ENCODE measurements at regions of chr16 and their contacts with region 1.

Region 1: DNA sequence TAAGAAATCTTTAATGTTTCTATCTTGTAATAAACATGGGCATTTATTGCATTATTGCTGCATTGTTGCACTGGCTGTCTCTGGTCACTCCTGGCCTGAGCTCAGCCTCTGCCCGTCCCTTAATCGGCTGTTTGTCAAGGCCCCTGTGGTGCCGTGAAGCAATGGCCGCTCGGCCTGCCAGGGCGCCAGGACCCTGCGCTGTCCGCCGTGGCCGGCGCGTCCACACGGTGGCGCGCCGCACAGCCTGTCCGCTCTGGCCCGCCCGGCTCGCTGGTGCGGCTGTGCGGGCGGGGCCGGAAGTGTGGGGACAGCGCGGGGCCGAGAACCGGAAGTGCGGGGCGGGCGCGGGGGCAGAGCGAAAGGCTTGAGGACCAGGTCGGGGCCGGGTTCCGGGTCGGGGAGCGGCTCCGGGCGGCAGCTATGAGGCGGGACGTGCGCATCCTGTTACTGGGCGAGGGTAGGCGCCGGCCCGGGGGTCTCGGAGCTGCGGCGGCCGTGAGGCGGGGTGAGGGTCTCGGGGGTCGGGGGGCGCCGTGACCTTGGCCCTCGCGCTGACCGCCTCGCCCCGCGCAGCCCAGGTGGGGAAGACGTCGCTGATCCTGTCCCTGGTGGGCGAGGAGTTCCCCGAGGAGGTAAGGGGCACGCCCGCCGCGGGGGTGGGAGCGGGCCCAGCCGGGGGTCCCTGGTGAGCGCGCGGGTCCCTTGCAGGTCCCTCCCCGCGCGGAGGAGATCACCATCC is at the start of gene RHOT2:
- DNase-seq: peak; percentile 89 to 93
- H3K4me3 ChIP-seq: peak within 1 kb of the TSS; percentile 81 to 88
- H3K27ac ChIP-seq: peak within 1 kb of the TSS; percentile 85 to 89
- H3K4me1 ChIP-seq: peaks cover 0 to 8% of the 10 kb centered on the region in 2 donors
- H3K27me3 ChIP-seq: no peaks in the 10 kb centered on the region
- CTCF ChIP-seq: peak; percentile 74 to 99 (median 96)
- POLR2A ChIP-seq: peak; percentile 46 to 71
- total RNA-seq, gene RHOT2: 29.1 to 99.7 (median 71.7) TPM

Region 2: GRCh38 chr16:569445-570254 is 98.3 kb before region 1 on chr16 and contains the start of gene PIGQ:
- intact Hi-C with region 1: loop called (anchors 10 kb)
- DNase-seq: peak; percentile 62 to 65
- H3K4me3 ChIP-seq: peak within 1 kb of the TSS; percentile 58 to 80
- H3K27ac ChIP-seq: peak within 1 kb of the TSS; percentile 76 to 78
- H3K4me1 ChIP-seq: peaks cover 13 to 15% of the 10 kb centered on the region in 2 donors
- H3K27me3 ChIP-seq: no peaks in the 10 kb centered on the region
- CTCF ChIP-seq: no peak
- POLR2A ChIP-seq: peak in 1 of 2 donors; percentile 34
- total RNA-seq, gene PIGQ: 10.0 to 56.9 (median 30.7) TPM

Region 3: DNA sequence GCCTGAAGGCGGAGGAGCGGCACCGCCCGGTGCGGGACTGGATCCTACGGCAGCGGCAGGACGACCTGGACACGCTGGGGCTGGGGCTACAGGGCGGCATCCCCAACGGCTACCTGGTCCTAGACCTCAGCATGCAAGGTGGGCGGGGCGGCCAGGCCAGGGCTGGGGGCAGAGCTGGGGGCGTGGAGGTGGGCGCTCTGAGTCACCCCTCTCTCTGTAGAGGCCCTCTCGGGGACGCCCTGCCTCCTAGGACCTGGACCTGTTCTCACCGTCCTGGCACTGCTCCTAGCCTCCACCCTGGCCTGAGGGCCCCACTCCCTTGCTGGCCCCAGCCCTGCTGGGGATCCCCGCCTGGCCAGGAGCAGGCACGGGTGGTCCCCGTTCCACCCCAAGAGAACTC is 100.5 kb after region 1 on chr16:
- intact Hi-C with region 1: no loop called
- DNase-seq: no peak
- H3K4me3 ChIP-seq: no peak overlapping the region
- H3K27ac ChIP-seq: no peak overlapping the region
- H3K4me1 ChIP-seq: no peaks in the 10 kb centered on the region
- H3K27me3 ChIP-seq: no peaks in the 10 kb centered on the region
- CTCF ChIP-seq: no peak
- POLR2A ChIP-seq: no peak

Region 4: DNA sequence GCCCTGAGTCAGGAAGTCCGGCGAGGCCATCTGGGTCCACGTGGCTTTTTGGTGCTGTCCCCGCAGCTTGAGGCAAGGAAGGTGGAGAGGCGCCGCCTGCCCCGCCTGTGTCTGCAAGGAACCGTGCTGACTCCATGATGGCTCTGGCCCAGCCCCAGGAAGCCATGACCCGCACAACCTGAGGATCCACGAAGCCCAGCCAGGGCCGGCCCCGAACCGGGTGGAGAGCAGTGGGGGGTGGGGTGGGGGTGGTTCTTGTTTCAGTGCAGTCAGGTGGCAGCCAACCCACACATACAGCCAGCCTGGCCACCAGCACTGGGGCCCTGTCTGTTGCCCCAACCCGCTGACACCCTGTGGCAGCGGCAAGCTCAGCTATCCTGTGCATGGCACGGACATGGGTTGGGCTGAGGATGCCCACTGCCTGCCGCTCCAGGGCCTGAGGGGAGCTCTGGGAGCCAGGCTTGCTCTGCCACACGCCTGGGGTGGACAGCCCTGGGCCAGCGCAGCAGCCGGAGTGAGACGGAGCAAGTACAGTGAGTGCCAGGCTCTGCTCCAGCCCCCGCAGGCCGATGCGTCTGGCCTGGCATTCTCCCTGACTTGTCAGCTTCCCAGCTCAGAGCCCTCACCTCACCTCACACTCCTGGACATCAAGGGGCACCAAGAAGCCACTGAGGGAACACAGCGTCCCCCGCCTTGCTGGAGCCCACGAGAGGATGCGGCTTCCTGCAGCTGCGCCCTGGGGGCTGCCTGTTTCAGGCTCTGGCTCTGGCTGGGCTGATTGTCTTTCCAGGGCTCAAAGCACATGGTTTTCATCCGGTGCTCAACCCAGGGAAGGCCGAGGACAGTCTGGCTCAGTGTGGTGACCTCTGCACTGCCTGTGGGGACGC is 234.0 kb after region 1 on chr16:
- intact Hi-C with region 1: no loop called
- DNase-seq: no peak
- H3K4me3 ChIP-seq: no peak overlapping the region
- H3K27ac ChIP-seq: no peak overlapping the region
- H3K4me1 ChIP-seq: no peaks in the 10 kb centered on the region
- H3K27me3 ChIP-seq: no peaks in the 10 kb centered on the region
- CTCF ChIP-seq: no peak
- POLR2A ChIP-seq: no peak